ENCODE measurements at regions of chr12 and their contacts with region 1.

Region 1: GRCh38 chr12:49188914-49189367 is at the start of gene TUBA1A:
- DNase-seq: peak; percentile 99
- ATAC-seq: peak; percentile 89
- H3K4me3 Mint-ChIP-seq: peak within 1 kb of the TSS; percentile 88
- H3K27ac Mint-ChIP-seq: peak within 1 kb of the TSS; percentile 95
- H3K4me1 Mint-ChIP-seq: peaks cover 17% of the 10 kb centered on the region
- H3K27me3 Mint-ChIP-seq: peaks cover 4% of the 10 kb centered on the region
- total RNA-seq, gene TUBA1A: 117 to 120 TPM

Region 2: GRCh38 chr12:49098035-49098451 is 90.9 kb before region 1 on chr12:
- CTCF ChIA-PET with region 1: interaction called, 11 read pairs
- POLR2A ChIA-PET with region 1: no interaction called
- DNase-seq: peak; percentile 75
- ATAC-seq: peak; percentile 70
- H3K4me3 Mint-ChIP-seq: no peak overlapping the region
- H3K27ac Mint-ChIP-seq: no peak overlapping the region
- H3K4me1 Mint-ChIP-seq: peaks cover 13% of the 10 kb centered on the region
- H3K27me3 Mint-ChIP-seq: peaks cover 22% of the 10 kb centered on the region

Region 3: DNA sequence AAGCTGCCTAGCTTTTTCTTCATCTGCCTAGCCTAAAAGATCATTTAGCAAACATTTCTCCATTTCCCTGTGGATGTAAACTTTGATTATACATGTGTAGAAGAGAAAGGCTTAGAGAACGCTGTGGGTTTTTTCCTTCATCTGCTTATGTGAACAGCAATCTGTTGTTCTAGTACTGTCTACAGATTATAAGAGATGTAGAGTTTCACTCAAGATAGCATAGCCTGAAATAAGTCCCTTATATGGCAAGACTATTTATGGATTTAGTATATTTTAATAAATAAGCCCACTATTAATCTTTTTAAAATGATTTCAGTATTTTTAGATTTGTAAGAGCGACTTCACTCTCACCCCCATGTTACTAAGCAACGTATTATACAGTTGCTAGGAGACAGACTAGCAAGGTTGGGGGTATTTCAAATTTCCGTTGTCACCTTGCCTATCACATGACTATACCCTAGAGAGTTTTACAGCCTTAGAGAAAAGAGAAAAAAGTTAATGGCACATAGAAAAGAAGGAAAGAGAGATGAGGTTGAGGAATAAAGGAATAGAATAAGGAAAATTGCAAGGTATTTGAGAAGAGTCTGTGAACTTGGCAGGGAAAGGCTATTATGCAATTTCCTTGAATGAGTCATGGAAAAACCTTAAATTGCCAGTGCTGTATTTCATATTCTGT is 12.1 kb after region 1 on chr12:
- CTCF ChIA-PET with region 1: interaction called, 11 read pairs
- POLR2A ChIA-PET with region 1: interaction called, 32 read pairs
- DNase-seq: no peak
- ATAC-seq: peak; percentile 86
- H3K4me3 Mint-ChIP-seq: no peak overlapping the region
- H3K27ac Mint-ChIP-seq: no peak overlapping the region
- H3K4me1 Mint-ChIP-seq: peaks cover 14% of the 10 kb centered on the region
- H3K27me3 Mint-ChIP-seq: peaks cover 13% of the 10 kb centered on the region

Region 4: GRCh38 chr12:49223122-49223521 is 34.2 kb after region 1 on chr12:
- CTCF ChIA-PET with region 1: no interaction called
- POLR2A ChIA-PET with region 1: no interaction called
- DNase-seq: no peak
- ATAC-seq: no peak
- H3K4me3 Mint-ChIP-seq: no peak overlapping the region
- H3K27ac Mint-ChIP-seq: no peak overlapping the region
- H3K4me1 Mint-ChIP-seq: no peaks in the 10 kb centered on the region
- H3K27me3 Mint-ChIP-seq: peaks cover 10% of the 10 kb centered on the region

Region 5: GRCh38 chr12:49232940-49233841 is 44.2 kb after region 1 on chr12:
- CTCF ChIA-PET with region 1: interaction called, 21 read pairs
- POLR2A ChIA-PET with region 1: interaction called, 16 read pairs
- DNase-seq: no peak
- ATAC-seq: no peak
- H3K4me3 Mint-ChIP-seq: no peak overlapping the region
- H3K27ac Mint-ChIP-seq: peak overlapping the region; percentile 29
- H3K4me1 Mint-ChIP-seq: peaks cover 21% of the 10 kb centered on the region
- H3K27me3 Mint-ChIP-seq: peaks cover 10% of the 10 kb centered on the region

Region 6: DNA sequence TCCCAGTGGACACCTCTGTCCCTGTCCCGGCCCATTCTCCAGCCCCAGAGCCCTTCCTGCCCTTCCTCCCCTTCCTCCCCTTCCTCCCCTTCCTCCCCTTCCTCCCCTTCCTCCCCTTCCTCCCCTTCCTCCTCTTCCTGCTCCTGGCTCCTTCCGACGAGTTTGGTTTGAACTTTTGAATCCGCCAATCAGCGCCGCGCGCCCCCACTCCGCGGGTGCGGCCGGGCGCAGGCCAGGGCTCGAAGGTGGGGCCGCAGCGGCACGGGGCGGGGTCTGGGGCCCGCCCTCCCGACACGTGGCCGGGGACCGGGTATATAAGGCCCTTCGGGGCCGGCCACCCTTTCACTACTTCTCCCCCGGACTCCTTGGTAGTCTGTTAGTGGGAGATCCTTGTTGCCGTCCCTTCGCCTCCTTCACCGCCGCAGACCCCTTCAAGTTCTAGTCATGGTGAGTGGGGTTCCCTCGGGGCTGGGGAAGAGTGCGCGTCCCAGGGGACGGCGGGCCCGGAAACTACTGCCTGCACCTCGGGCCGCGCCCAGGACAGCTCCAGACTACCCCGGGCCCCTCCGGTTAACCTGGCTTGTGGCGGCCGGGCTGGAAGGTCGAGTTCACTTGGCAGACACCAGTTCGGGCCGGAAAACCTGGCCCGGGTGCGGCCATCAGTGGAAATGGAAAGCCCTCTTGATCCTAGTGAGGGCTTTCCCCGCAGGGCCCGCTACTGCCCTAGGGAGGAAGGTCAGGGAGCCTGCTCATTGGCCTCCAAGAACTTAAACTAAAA is 76.0 kb after region 1 on chr12 and contains the start of gene TUBA1C:
- CTCF ChIA-PET with region 1: no interaction called
- POLR2A ChIA-PET with region 1: interaction called, 19 read pairs
- DNase-seq: peak; percentile 94
- ATAC-seq: peak; percentile 88
- H3K4me3 Mint-ChIP-seq: peak within 1 kb of the TSS; percentile 99
- H3K27ac Mint-ChIP-seq: peak within 1 kb of the TSS; percentile 99
- H3K4me1 Mint-ChIP-seq: peaks cover 47% of the 10 kb centered on the region
- H3K27me3 Mint-ChIP-seq: no peaks in the 10 kb centered on the region
- total RNA-seq, gene TUBA1C: 308 to 324 TPM

Measured in activated CD8-positive, alpha-beta T cell treated with anti-CD3 and anti-CD28 coated beads, Interleukin-2, amount 10 ng/mL, durations not matched to agents 7 days and 5 days (primary cell).